Heart left ventricle (tissue), 16 donors: ENCODE measurements at regions of chr19 and their contacts with region 1.

Region 1: GRCh38 chr19:17488593-17489391 is 18.5 kb downstream of the SLC27A1 start:
- DNase-seq: peak in 4 of 5 donors; percentile 67 to 81 (median 70)
- ATAC-seq: peak; percentile 72 to 87 (median 80)
- H3K4me3 ChIP-seq: peak overlapping the region in 6 of 12 donors; percentile 8 to 41 (median 30)
- H3K27ac ChIP-seq: peak overlapping the region in 8 of 12 donors; percentile 19 to 67 (median 42)
- H3K4me1 ChIP-seq: peaks cover 0 to 32% (median 13%) of the 10 kb centered on the region in 12 donors
- H3K27me3 ChIP-seq: no peaks in the 10 kb centered on the region
- CTCF ChIP-seq: peak in 2 of 12 donors; percentile 22 to 38
- POLR2A ChIP-seq: no peak

Region 2: GRCh38 chr19:17260842-17261325 is 227.9 kb before region 1 on chr19:
- intact Hi-C with region 1: no loop called
- DNase-seq: peak; percentile 73 to 90 (median 83)
- ATAC-seq: peak; percentile 65 to 87 (median 84)
- H3K4me3 ChIP-seq: peak overlapping the region in 2 of 12 donors; percentile 9 to 17
- H3K27ac ChIP-seq: no peak overlapping the region
- H3K4me1 ChIP-seq: peaks cover 0 to 9% (median 5%) of the 10 kb centered on the region in 12 donors
- H3K27me3 ChIP-seq: no peaks in the 10 kb centered on the region
- CTCF ChIP-seq: peak; percentile 78 to 92 (median 88)
- POLR2A ChIP-seq: no peak

Region 3: GRCh38 chr19:18109733-18110595 is 621.2 kb after region 1 on chr19:
- intact Hi-C with region 1: loop called in 1 of 10 experiments (anchors 10 kb)
- DNase-seq: peak; percentile 50 to 85 (median 69)
- ATAC-seq: peak in 3 of 4 donors; percentile 62 to 82 (median 79)
- H3K4me3 ChIP-seq: peak overlapping the region; percentile 45 to 79 (median 68)
- H3K27ac ChIP-seq: peak overlapping the region in 9 of 12 donors; percentile 22 to 81 (median 66)
- H3K4me1 ChIP-seq: peaks cover 0 to 28% (median 8%) of the 10 kb centered on the region in 12 donors
- H3K27me3 ChIP-seq: peaks cover 0 to 4% (median 0%) of the 10 kb centered on the region in 9 donors
- CTCF ChIP-seq: no peak
- POLR2A ChIP-seq: peak in 1 of 2 donors; percentile 29